HepG2 (cell line): ENCODE measurements at regions of chr3 and their contacts with region 1.

Region 1: DNA sequence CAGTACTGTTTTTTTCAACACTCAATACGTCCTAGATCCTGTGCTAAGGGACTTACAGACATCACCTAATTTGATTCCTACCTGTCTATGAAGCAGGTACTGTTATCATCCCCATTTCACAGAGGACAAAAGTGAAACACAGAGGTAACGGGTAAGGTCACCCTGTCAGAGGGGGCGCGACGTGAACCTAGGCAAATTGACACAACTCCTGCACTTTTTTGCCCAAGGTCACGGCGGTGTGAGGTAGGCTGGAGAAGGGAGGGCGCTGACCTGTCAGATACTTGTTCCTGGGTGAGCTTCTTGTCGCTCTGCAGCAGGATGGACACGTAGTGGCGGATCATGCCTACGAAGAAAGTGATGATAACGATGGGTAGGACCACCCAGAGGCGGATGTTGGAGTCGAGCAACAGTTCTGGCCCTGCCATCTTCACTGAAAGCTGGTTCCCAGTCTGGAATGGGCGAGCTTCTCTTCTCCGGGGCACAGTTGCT is 360 bp downstream of the EMC3 start:
- DNase-seq: no peak
- ATAC-seq: peak; percentile 73
- H3K4me3 ChIP-seq: peak overlapping the region; percentile 78 to 100 (median 95)
- H3K27ac ChIP-seq: peak overlapping the region; percentile 65
- H3K4me1 ChIP-seq: peaks cover 25% of the 10 kb centered on the region
- H3K27me3 ChIP-seq: no peaks in the 10 kb centered on the region; a peak in 1 of 5 replicates
- CTCF ChIP-seq: no peak
- EP300 ChIP-seq: no peak
- POLR2A ChIP-seq: no peak
- RAD21 ChIP-seq: no peak

Region 2: GRCh38 chr3:10026084-10026890 is 40.0 kb after region 1 on chr3 and contains the start of gene FANCD2:
- CTCF ChIA-PET with region 1: no interaction called
- POLR2A ChIA-PET with region 1: interaction called, 5 read pairs
- in situ Hi-C with region 1: no loop called
- intact Hi-C with region 1: loop called (anchors 5 kb)
- DNase-seq: peak; percentile 72
- ATAC-seq: peak; percentile 97
- H3K4me3 ChIP-seq: peak within 1 kb of the TSS; percentile 80 to 92 (median 90)
- H3K27ac ChIP-seq: peak within 1 kb of the TSS; percentile 68
- H3K4me1 ChIP-seq: peaks cover 18% of the 10 kb centered on the region
- H3K27me3 ChIP-seq: no peaks in the 10 kb centered on the region
- CTCF ChIP-seq: no peak; the same call in 1 of the 2 replicates
- EP300 ChIP-seq: no peak
- POLR2A ChIP-seq: peak; percentile 75 to 86
- RAD21 ChIP-seq: peak; percentile 55; the same call in 1 of the 2 replicates
- total RNA-seq, gene FANCD2: 42.0 and 51.9 TPM in 2 replicates

Region 3: GRCh38 chr3:10108091-10108490 is 121.8 kb after region 1 on chr3 and contains the start of gene FANCD2OS:
- CTCF ChIA-PET with region 1: no interaction called
- POLR2A ChIA-PET with region 1: no interaction called
- in situ Hi-C with region 1: no loop called
- intact Hi-C with region 1: no loop called
- DNase-seq: no peak
- ATAC-seq: no peak
- H3K4me3 ChIP-seq: no peak within 1 kb of the TSS
- H3K27ac ChIP-seq: no peak within 1 kb of the TSS
- H3K4me1 ChIP-seq: peaks cover 10% of the 10 kb centered on the region
- H3K27me3 ChIP-seq: no peaks in the 10 kb centered on the region
- CTCF ChIP-seq: no peak
- EP300 ChIP-seq: no peak
- POLR2A ChIP-seq: no peak
- RAD21 ChIP-seq: no peak
- total RNA-seq, gene FANCD2OS: not detected in 2 replicates